Posterior vena cava (tissue), 2 donors: ENCODE measurements at regions of chr1 and their contacts with region 1.

Region 1: GRCh38 chr1:159089184-159089791 is 12.7 kb upstream of the AIM2 start:
- DNase-seq: no peak

Region 2: DNA sequence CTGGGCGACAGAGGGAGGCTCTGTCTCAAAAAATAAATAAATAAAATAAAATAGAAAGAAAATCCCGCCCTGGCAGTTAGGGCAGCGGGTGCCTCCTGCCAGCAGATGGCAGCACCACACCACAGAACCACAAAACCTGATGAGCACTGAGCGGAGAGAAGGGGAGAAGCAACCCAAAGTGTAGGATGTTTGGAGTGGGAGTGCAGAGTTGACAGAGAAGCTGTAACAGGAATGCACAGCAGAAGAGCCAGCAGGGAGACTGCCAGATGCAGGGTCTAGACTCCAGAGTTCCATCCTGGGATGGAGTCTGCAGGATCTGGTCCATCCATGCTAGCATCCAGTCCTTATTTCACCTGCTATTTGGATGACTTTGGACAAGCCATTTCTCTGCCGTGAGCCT is 1125.6 kb before region 1 on chr1:
- intact Hi-C with region 1: loop called in 1 of 2 experiments (anchors 10 kb)
- DNase-seq: peak; percentile 88

Region 3: DNA sequence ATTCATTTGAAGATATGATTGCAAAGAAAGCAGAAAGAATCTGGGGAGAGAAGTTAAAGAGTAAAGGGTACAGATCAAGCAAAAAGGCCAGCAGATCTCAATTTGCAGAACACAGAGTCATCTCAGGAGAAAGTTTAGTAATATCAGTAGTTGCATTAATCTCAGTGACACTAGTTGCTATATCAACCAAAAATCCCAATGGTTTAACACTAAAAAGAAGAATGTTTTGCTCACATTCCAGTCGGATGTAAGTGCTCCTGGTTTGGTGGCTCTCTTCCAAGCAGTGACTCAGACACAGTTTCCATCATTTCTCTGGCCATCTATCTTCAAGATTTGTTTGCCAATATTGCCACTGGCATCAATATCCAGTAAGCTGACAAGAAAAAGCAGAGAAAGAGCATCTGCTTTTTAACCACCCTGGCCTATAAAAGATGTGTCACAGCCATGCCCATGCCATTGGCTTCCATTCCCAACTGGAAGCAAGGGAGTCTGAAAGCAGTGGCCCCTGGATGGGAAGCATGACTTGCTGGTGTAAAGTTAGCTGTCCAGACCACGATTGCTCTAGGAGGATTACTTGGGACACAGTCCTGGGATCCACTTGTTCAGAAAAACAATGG is 32.8 kb after region 1 on chr1:
- intact Hi-C with region 1: no loop called
- DNase-seq: no peak

Region 4: GRCh38 chr1:160400223-160400645 is 1310.9 kb after region 1 on chr1 and contains the start of gene VANGL2:
- intact Hi-C with region 1: loop called in 1 of 2 experiments (anchors 5 kb)
- DNase-seq: no peak
- total RNA-seq, gene VANGL2: 2.0 to 2.4 TPM